Activated CD4-positive, alpha-beta memory T cell treated with anti-CD3 and anti-CD28 coated beads for 36 hours (primary cell): ENCODE measurements at regions of chr6 and their contacts with region 1.

Region 1: DNA sequence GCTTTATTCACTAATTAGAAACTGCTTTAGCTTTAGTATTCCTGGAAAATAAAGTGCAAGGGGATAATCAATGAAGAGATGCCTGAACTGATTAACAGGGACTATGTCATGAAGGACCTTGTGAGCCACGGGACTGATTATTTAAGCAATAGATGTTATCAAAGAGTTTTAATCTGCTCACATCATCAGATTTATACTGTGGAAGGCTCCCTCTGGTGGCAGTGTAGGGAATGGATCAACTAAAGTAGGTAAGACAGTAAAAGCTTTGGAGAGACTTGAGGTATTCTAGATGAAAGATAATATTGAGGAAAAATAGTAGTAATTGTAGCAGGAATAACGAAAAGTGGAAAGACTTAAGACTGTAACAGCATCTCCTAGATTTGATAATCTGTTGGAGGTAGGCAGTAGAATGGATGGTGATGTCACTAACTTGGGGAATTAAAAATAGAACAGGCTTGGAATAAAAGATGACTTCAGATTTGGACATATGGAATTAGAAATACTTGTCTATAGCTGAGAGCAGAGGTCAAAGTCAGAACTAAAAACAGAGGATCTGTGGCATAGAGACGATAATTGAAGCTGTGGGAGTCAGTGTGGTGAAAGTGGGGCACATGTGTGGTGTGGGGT is 80.3 kb upstream of the HTR1E start:
- DNase-seq: peak; percentile 14
- H3K4me3 Mint-ChIP-seq: no peak overlapping the region
- H3K27ac Mint-ChIP-seq: no peak overlapping the region
- H3K4me1 Mint-ChIP-seq: no peaks in the 10 kb centered on the region
- H3K27me3 Mint-ChIP-seq: no peaks in the 10 kb centered on the region

Region 2: DNA sequence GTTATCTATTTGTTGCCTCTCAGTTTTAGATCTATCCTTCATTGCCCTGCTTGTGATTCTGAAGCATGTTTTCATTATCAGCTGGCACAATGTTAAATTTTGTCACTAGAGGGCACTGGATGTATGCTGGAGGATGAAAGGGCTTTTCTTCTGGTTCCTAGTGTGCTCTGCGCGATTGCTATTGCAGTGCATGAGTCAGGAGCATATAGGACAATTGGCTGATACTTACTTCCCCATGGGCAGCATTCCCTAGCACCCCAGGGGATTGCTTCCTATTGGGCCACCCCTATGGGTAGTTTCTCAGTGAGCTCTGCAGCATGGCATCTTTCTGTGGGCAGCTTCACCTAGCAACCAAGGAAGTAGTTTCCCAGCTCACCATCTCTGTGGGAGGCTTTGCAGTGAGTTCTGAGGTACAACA is 934.0 kb before region 1 on chr6:
- CTCF ChIA-PET with region 1: no interaction called
- POLR2A ChIA-PET with region 1: no interaction called
- intact Hi-C with region 1: loop called (anchors 2 kb)
- DNase-seq: no peak
- H3K4me3 Mint-ChIP-seq: no peak overlapping the region
- H3K27ac Mint-ChIP-seq: no peak overlapping the region
- H3K4me1 Mint-ChIP-seq: no peaks in the 10 kb centered on the region
- H3K27me3 Mint-ChIP-seq: no peaks in the 10 kb centered on the region

Region 3: DNA sequence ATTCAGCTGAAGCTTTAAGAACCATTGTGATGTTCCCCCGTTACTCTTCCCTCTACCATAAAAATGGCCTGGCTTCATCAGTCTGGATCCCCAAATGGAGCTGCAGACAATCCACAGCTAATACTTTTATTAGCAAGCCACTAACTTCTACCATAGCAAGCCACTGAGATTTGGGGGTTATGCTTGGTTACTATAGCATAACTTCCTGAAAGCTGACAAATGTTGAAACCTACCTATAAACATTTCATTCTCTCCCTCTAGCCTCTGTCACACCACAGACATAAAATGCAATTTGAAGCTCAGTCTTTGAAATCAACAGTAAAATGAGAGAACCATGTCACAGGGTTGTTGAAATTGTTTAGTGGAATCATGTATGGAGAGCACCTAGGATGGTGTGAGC is 77.3 kb after region 1 on chr6:
- CTCF ChIA-PET with region 1: no interaction called
- POLR2A ChIA-PET with region 1: no interaction called
- intact Hi-C with region 1: no loop called
- DNase-seq: no peak
- H3K4me3 Mint-ChIP-seq: no peak overlapping the region
- H3K27ac Mint-ChIP-seq: no peak overlapping the region
- H3K4me1 Mint-ChIP-seq: no peaks in the 10 kb centered on the region
- H3K27me3 Mint-ChIP-seq: peaks cover 21% of the 10 kb centered on the region